Activated B cell treated with CpG ODN at 0.5 μM for 24 hours (primary cell): ENCODE measurements at regions of chr1 and their contacts with region 1.

Region 1: GRCh38 chr1:79497193-79497773 is 490.8 kb upstream of the ADGRL4 start:
- DNase-seq: no peak
- ATAC-seq: no peak
- H3K4me3 Mint-ChIP-seq: no peak overlapping the region
- H3K27ac Mint-ChIP-seq: no peak overlapping the region
- H3K4me1 Mint-ChIP-seq: no peaks in the 10 kb centered on the region
- H3K27me3 Mint-ChIP-seq: no peaks in the 10 kb centered on the region
- CTCF ChIP-seq: peak; percentile 31

Region 2: DNA sequence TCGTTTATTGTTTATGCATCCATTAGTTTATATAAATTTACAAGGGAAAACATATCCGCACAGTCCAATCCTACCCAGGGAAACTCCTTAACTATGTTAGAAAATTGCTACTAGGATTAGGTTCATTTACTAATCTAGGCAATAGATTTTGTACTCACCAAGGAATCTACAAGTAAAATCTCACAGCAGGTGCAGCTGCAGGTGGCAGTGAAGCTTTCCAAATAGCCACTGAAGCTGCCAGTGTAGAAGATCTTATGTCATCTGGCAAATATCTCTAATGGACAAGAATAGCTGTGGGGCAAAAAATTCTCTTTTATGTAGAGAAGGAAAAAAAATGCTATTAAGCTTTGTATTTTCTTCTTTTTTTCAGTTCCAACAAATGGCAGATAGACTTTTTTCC is 472.6 kb after region 1 on chr1:
- CTCF ChIA-PET with region 1: no interaction called
- POLR2A ChIA-PET with region 1: no interaction called
- intact Hi-C with region 1: loop called (anchors 5 kb)
- DNase-seq: no peak
- ATAC-seq: no peak
- H3K4me3 Mint-ChIP-seq: no peak overlapping the region
- H3K27ac Mint-ChIP-seq: no peak overlapping the region
- H3K4me1 Mint-ChIP-seq: no peaks in the 10 kb centered on the region
- H3K27me3 Mint-ChIP-seq: no peaks in the 10 kb centered on the region
- CTCF ChIP-seq: no peak